A673 (cell line): ENCODE measurements at regions of chr2 and their contacts with region 1.

Region 1: DNA sequence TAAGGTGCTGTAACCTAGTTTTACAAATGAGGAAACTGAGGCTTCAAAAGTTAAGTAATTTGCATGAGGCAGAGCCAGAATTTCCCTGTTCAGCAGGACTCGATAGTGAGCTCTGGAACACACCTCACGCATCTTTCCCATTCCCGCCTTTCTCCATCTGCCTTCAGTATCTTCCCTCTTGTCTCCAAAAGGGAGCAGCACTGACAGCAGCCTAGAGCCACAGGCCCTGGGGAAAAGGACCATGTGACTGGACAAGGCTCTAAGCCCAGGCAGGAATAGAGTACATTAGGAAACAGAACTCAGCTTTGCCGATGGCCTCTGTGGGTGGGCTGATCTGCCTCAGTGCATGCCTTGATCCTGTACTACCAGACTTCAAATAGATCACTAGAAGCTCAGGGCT is 21.5 kb downstream of the GPR155 start:
- DNase-seq: peak; percentile 39
- H3K4me3 ChIP-seq: no peak overlapping the region
- H3K27ac ChIP-seq: no peak overlapping the region
- H3K4me1 ChIP-seq: no peaks in the 10 kb centered on the region
- H3K27me3 ChIP-seq: peaks cover 56% of the 10 kb centered on the region
- CTCF ChIP-seq: no peak

Region 2: GRCh38 chr2:174546581-174547506 is 81.5 kb after region 1 on chr2:
- CTCF ChIA-PET with region 1: interaction called, 10 read pairs
- POLR2A ChIA-PET with region 1: no interaction called
- intact Hi-C with region 1: loop called (anchors 2 kb)
- DNase-seq: peak; percentile 49
- H3K4me3 ChIP-seq: no peak overlapping the region
- H3K27ac ChIP-seq: no peak overlapping the region
- H3K4me1 ChIP-seq: no peaks in the 10 kb centered on the region
- H3K27me3 ChIP-seq: peaks cover 14% of the 10 kb centered on the region
- CTCF ChIP-seq: peak; percentile 59

Region 3: GRCh38 chr2:174603280-174603679 is 138.0 kb after region 1 on chr2:
- CTCF ChIA-PET with region 1: interaction called, 6 read pairs
- POLR2A ChIA-PET with region 1: no interaction called
- intact Hi-C with region 1: loop called (anchors 1 kb)
- DNase-seq: peak; percentile 55
- H3K4me3 ChIP-seq: no peak overlapping the region
- H3K27ac ChIP-seq: no peak overlapping the region
- H3K4me1 ChIP-seq: no peaks in the 10 kb centered on the region
- H3K27me3 ChIP-seq: no peaks in the 10 kb centered on the region
- CTCF ChIP-seq: peak; percentile 67

Region 4: DNA sequence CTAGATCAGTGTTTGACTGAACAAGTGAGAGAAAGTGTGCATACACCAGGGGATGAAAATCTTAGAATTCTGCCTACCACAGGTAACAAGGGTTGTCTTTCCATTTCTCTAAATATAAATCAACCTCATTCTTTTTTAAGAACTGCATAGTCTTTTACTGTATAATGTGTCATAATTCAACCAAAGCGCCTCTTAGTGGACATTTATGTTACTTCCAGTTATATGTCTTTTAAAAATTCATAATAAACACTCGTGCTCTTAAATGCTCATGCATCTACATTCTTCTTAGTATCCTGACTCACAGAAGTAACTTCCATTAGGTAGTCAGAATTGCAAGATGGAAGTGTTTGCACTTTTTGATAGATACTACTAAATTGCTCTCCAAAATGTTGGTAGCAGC is 222.8 kb after region 1 on chr2:
- CTCF ChIA-PET with region 1: interaction called, 10 read pairs
- POLR2A ChIA-PET with region 1: no interaction called
- intact Hi-C with region 1: loop called (anchors 2 kb)
- DNase-seq: peak; percentile 37
- H3K4me3 ChIP-seq: no peak overlapping the region
- H3K27ac ChIP-seq: no peak overlapping the region
- H3K4me1 ChIP-seq: peaks cover 3% of the 10 kb centered on the region
- H3K27me3 ChIP-seq: peaks cover 36% of the 10 kb centered on the region
- CTCF ChIP-seq: peak; percentile 65